Activated T-helper 2 cell treated with anti-CD3 and anti-CD28 coated beads, Interferon-gamma antibody, Interleukin-2, Interleukin-4, amounts not matched to agents 10 μg/mL and 5 μg/mL and 100 μg/mL, durations not matched to agents 14 hours and 24 hours and 36 hours (primary cell): ENCODE measurements at regions of chr11 and their contacts with region 1.

Region 1: GRCh38 chr11:126268708-126269579 is at the starts of genes FOXRED1 and SRPRA:
- DNase-seq: peak; percentile 100
- H3K4me3 Mint-ChIP-seq: peak within 1 kb of the TSS; percentile 94
- H3K27ac Mint-ChIP-seq: peak within 1 kb of the TSS; percentile 97
- H3K4me1 Mint-ChIP-seq: peaks cover 28% of the 10 kb centered on the region
- H3K27me3 Mint-ChIP-seq: no peaks in the 10 kb centered on the region
- total RNA-seq, gene FOXRED1: 48.7 and 52.3 TPM in 2 replicates
- total RNA-seq, gene SRPRA: 175 and 177 TPM in 2 replicates

Region 2: GRCh38 chr11:125871391-125872137 is 397.4 kb before region 1 on chr11:
- intact Hi-C with region 1: no loop called
- DNase-seq: no peak
- H3K4me3 Mint-ChIP-seq: no peak overlapping the region
- H3K27ac Mint-ChIP-seq: no peak overlapping the region
- H3K4me1 Mint-ChIP-seq: no peaks in the 10 kb centered on the region
- H3K27me3 Mint-ChIP-seq: peaks cover 3% of the 10 kb centered on the region

Region 3: DNA sequence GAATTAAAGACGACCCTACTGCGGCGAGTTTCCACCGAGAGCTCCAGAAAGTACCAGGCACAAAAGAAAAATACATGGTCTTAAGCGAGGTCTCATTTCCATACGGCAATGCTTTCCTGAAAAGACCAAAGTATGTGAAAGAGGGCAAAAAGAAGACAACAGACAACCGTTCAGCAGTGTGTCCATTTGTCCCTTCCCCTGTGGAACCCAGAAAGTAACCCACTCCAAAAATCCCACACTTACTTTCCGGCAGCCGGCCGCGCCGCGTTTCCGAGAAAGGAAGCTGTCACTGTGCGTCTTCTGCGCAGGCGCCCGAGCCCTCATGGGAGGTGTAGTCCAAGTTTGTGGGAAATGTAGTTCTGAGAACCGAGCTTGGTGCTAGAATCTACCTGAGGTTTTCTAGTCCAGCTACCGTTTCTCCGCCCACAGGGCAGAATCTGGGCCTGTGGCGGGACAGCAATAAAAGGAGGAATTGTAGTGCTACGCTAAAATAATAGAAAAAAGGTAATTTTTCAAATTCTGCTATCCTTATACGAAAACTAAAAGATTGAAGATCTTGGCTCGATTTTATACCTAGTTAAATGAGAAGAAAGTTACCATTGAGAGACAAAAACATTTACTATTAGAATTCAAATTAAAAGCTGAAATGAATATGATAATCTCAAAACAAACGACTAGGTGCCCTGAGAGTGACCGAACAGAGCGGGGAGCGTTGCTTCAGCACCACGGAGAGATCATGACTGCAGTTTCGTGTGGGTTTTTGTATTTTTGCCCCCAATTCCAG is 365.8 kb before region 1 on chr11 and contains the start of gene PUS3:
- intact Hi-C with region 1: loop called (anchors 5 kb)
- DNase-seq: peak; percentile 84
- H3K4me3 Mint-ChIP-seq: peak within 1 kb of the TSS; percentile 94
- H3K27ac Mint-ChIP-seq: peak within 1 kb of the TSS; percentile 92
- H3K4me1 Mint-ChIP-seq: peaks cover 29% of the 10 kb centered on the region
- H3K27me3 Mint-ChIP-seq: peaks cover 31% of the 10 kb centered on the region
- total RNA-seq, gene PUS3: 16.0 and 17.0 TPM in 2 replicates

Region 4: GRCh38 chr11:126062679-126063506 is 206.1 kb before region 1 on chr11 and contains the start of gene CDON:
- intact Hi-C with region 1: loop called (anchors 2 kb)
- DNase-seq: peak; percentile 90
- H3K4me3 Mint-ChIP-seq: peak within 1 kb of the TSS; percentile 81
- H3K27ac Mint-ChIP-seq: peak within 1 kb of the TSS; percentile 97
- H3K4me1 Mint-ChIP-seq: peaks cover 13% of the 10 kb centered on the region
- H3K27me3 Mint-ChIP-seq: peaks cover 46% of the 10 kb centered on the region
- total RNA-seq, gene CDON: 3.2 and 3.5 TPM in 2 replicates

Region 5: DNA sequence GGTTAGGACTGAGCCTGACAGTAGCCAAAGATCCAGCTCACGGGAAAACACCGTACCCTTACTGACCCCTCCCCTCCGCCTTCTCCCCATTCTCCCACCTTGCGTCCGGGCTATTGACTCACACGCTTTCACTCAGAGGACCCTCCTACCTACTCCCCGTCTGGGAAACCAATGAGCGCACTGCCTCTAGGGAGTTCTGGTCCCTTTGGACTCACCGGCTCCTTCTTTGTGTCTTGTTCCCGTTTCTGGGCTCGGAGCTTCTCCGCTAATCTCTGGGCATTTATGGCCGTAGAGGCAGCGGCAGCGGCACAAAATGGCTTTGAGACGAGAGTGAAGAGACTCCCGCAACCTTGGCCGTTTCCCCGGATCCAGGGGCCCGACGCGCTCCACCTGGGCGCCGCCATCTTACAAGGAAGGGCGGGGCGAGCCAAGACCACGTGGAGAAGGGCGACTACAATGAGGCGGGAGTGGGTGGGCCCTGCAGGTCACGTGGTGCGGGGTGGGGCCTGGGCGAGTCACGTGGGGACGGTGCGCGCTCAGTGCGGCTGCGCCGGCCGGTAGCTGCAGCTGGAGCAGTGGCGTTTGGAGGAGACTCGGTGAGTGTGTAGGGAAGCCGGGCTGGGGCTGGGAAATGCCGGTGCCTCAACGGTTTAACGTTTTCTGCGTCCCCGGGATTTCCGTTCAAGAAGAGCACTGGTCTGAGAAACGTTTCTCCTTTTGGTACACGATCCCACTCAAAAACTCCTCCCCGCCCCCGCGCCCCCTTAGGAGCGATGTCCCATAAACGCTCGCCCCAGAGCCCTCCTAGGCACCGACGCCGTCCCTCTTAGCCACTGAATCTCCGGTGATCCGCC is 57.5 kb before region 1 on chr11 and contains the starts of genes FAM118B and RPUSD4:
- intact Hi-C with region 1: loop called (anchors 1 kb)
- DNase-seq: peak; percentile 98
- H3K4me3 Mint-ChIP-seq: peak within 1 kb of the TSS; percentile 99
- H3K27ac Mint-ChIP-seq: peak within 1 kb of the TSS; percentile 92
- H3K4me1 Mint-ChIP-seq: peaks cover 27% of the 10 kb centered on the region
- H3K27me3 Mint-ChIP-seq: no peaks in the 10 kb centered on the region
- total RNA-seq, gene FAM118B: 11.6 and 11.7 TPM in 2 replicates
- total RNA-seq, gene RPUSD4: 43.9 and 44.6 TPM in 2 replicates

Region 6: DNA sequence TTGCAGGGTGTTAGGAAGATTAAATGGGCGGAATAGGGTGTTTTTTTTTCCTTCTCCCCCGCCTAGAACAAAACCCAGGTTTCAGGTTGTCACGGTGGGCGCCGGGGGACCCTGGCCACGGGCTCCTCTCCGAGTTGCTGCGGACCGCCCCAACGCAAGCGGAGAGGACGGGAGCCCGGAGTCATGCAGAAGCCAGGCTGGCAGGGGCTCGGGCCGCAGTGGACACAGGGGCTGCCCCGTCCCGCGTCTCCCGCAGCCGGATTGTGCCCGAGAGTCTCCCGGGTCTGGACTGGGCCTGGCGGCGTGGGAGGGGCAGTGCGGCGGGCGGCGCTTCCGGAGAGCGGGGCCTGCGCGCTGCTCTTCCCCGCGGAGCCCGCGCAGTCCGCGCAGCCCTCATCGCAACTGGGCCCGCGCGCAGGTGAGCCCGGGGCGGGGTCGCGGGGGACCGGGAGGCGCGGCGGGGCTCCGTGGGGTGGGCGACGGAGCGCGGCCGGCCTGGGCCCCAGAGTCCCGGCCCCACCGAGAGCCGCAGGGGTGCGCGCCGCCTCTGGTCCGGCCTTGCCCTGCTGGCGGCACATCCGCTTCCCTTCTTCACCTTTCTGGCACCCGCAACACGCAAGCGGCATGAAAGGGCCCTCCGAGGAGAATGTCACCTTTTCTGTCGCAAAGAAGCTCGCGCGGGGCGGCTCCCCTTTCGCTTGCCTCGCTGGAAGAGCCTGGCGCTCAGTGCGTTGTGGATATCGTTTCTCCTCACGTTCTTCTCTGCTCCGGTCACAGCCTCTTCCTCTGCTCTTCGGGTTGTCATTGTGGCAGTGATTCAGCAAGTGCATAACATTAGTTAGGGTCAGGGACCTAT is 14.0 kb after region 1 on chr11 and contains the start of gene TIRAP:
- intact Hi-C with region 1: loop called (anchors 1 kb)
- DNase-seq: peak; percentile 55
- H3K4me3 Mint-ChIP-seq: peak within 1 kb of the TSS; percentile 99
- H3K27ac Mint-ChIP-seq: peak within 1 kb of the TSS; percentile 99
- H3K4me1 Mint-ChIP-seq: peaks cover 35% of the 10 kb centered on the region
- H3K27me3 Mint-ChIP-seq: no peaks in the 10 kb centered on the region
- total RNA-seq, gene TIRAP: 15.9 TPM in 2 replicates

Region 7: GRCh38 chr11:126303623-126304456 is 34.9 kb after region 1 on chr11 and contains the start of gene DCPS:
- intact Hi-C with region 1: loop called (anchors 1 kb)
- DNase-seq: peak; percentile 87
- H3K4me3 Mint-ChIP-seq: peak within 1 kb of the TSS; percentile 99
- H3K27ac Mint-ChIP-seq: peak within 1 kb of the TSS; percentile 98
- H3K4me1 Mint-ChIP-seq: peaks cover 27% of the 10 kb centered on the region
- H3K27me3 Mint-ChIP-seq: no peaks in the 10 kb centered on the region
- total RNA-seq, gene DCPS: 39.8 and 42.1 TPM in 2 replicates